ENCODE measurements at regions of chr7 and their contacts with region 1.

Region 1: DNA sequence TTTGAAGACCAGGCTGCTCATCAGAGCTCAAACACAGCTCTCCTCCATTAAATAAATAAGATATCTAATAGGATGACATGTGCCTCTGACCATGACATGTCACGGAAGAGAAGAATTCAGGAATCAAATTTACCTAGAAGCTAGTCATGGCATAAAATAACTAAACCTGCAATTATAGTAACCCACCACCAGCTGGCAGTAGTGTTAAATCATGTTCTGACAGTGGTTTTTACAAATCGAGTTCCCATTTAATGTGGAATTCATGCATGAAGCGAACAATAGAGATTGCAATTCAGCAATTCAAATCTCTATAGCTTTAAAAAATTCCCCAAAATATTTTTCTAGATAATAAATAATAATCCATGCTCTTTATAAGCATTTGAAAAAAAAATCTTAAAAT is 74.6 kb upstream of the IKZF1 start:
- DNase-seq: peak; percentile 18
- H3K4me3 ChIP-seq: no peak overlapping the region
- H3K27ac ChIP-seq: no peak overlapping the region
- H3K4me1 ChIP-seq: peaks cover 6% of the 10 kb centered on the region
- H3K27me3 ChIP-seq: no peaks in the 10 kb centered on the region
- CTCF ChIP-seq: peak; percentile 51; the same call in 1 of the 2 replicates

Region 2: DNA sequence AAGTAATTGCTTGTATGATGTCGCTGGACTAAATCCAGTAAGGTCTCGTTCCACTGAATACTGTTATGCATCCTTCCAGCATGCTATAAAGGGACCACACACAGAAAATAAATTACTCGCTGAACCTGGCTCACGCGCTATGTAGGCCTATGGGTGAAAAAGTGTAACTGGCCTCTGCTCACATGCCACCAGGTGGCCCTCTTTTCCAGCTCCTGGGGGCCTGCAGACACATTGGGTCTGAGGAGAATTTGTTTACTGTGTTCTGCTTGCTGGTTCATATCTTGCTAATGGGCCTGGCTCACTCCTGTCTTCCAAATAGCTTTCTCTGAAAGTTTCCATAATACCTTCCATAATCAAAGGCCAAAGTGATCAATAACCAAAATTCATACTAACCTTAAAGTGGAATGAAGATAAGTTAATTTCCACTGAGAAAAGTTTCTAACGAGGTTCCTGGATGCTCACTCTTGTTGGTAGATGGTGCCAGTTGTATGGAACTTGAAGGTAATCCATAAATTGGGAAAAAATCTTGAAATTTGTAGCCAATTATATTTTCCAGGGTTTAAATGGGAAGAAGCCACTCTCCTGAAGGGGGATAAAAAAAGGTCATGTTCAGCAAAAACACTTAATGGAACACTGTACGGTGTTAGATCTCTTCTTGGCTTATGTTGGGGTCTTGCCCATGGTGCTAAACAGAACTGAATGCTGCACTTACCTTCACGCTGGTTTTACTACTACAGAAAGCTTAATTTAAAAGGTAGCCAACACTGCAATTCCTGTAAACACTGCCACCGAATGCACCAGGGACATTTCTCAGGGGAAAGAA is 109.9 kb before region 1 on chr7:
- CTCF ChIA-PET with region 1: no interaction called
- POLR2A ChIA-PET with region 1: no interaction called
- intact Hi-C with region 1: no loop called
- DNase-seq: peak; percentile 42
- H3K4me3 ChIP-seq: no peak overlapping the region
- H3K27ac ChIP-seq: no peak overlapping the region
- H3K4me1 ChIP-seq: no peaks in the 10 kb centered on the region
- H3K27me3 ChIP-seq: peaks cover 14% of the 10 kb centered on the region
- CTCF ChIP-seq: peak; percentile 51

Region 3: DNA sequence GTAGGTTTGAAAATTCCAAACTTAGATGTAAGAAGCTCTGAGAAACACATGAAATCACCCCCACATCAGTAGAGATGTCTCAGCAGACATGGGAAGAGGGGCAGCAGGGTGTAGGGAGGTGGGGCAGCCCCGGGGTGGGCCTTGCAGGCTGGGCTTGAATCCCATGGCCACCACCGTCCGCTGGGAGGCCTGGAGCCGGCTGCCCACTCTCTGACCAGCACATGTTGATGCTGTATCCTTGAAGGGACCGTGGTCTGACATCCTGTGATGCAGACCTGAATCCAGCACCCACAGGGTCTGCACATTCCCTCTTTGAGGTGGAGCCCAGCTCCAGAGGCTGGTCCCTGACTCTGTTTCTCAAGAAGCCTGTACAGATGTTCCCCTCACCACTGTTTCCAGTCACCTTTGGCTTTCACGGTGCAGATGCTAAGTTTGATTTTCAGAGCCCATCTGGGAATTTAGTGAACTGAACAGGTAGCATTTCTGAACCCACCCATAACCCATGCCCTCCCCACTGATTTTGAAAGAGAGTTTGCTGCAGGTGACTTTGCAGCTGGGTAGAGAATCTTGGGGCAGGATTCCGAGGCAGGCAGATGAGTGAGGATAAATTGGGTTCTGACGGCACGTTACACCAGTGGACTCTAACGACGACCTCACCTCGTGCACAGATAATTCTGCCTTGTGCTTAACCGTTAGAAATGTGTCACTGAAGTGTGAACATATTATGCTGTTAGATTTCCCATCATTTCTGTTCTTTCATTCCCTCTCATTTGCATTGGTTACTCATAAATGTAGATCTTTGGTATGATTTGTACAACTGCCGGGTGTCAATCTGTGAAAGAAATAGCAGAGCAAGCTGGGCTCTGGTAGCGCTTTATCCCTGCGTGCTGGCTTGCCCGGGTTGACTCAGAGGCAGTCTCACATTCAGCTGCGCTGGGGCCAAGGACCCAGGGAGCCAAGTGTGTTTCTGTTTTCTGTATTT is 120.3 kb after region 1 on chr7:
- CTCF ChIA-PET with region 1: no interaction called
- POLR2A ChIA-PET with region 1: no interaction called
- intact Hi-C with region 1: loop called (anchors 5 kb)
- DNase-seq: no peak
- H3K4me3 ChIP-seq: no peak overlapping the region
- H3K27ac ChIP-seq: no peak overlapping the region
- H3K4me1 ChIP-seq: peaks cover 9% of the 10 kb centered on the region
- H3K27me3 ChIP-seq: no peaks in the 10 kb centered on the region
- CTCF ChIP-seq: no peak

Region 4: DNA sequence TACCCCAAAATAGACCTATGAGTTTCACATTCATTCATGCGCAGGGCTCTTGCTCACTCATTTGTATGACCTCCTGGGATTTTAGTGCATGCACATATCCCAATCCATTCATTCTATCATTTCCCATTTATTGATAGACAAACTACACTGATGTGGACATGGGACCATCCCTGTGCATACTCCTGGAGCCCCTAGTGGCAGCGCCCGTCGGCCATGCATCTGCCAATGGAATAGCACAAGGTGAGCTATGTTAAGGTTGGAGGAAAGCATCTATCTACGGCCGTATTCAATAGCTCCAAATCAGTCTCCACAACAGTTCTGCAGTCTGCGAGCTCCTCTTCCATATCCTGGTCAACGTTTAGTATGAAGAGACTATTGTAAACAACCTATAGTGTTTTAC is 251.9 kb after region 1 on chr7:
- CTCF ChIA-PET with region 1: no interaction called
- POLR2A ChIA-PET with region 1: no interaction called
- intact Hi-C with region 1: no loop called
- DNase-seq: no peak
- H3K4me3 ChIP-seq: no peak overlapping the region
- H3K27ac ChIP-seq: no peak overlapping the region
- H3K4me1 ChIP-seq: no peaks in the 10 kb centered on the region
- H3K27me3 ChIP-seq: peaks cover 4% of the 10 kb centered on the region
- CTCF ChIP-seq: no peak

Measured in A673 (cell line).